Calu3 (cell line): ENCODE measurements at regions of chr17 and their contacts with region 1.

Region 1: GRCh38 chr17:39872751-39873150 is 4.7 kb downstream of the ZPBP2 start:
- DNase-seq: peak; percentile 78
- H3K4me3 Mint-ChIP-seq: no peak overlapping the region
- H3K27ac Mint-ChIP-seq: no peak overlapping the region
- H3K4me1 Mint-ChIP-seq: no peaks in the 10 kb centered on the region
- H3K27me3 Mint-ChIP-seq: peaks cover 11% of the 10 kb centered on the region
- CTCF ChIP-seq: no peak

Region 2: GRCh38 chr17:39668199-39668966 is 204.4 kb before region 1 on chr17 and contains the start of gene PNMT:
- CTCF ChIA-PET with region 1: interaction called, 25 read pairs
- intact Hi-C with region 1: no loop called
- DNase-seq: peak; percentile 100
- H3K4me3 Mint-ChIP-seq: peak within 1 kb of the TSS; percentile 24
- H3K27ac Mint-ChIP-seq: peak within 1 kb of the TSS; percentile 0
- H3K4me1 Mint-ChIP-seq: peaks cover 65% of the 10 kb centered on the region
- H3K27me3 Mint-ChIP-seq: peaks cover 69% of the 10 kb centered on the region
- CTCF ChIP-seq: no peak
- total RNA-seq, gene PNMT: 1.3 and 3.2 TPM in 2 replicates

Region 3: DNA sequence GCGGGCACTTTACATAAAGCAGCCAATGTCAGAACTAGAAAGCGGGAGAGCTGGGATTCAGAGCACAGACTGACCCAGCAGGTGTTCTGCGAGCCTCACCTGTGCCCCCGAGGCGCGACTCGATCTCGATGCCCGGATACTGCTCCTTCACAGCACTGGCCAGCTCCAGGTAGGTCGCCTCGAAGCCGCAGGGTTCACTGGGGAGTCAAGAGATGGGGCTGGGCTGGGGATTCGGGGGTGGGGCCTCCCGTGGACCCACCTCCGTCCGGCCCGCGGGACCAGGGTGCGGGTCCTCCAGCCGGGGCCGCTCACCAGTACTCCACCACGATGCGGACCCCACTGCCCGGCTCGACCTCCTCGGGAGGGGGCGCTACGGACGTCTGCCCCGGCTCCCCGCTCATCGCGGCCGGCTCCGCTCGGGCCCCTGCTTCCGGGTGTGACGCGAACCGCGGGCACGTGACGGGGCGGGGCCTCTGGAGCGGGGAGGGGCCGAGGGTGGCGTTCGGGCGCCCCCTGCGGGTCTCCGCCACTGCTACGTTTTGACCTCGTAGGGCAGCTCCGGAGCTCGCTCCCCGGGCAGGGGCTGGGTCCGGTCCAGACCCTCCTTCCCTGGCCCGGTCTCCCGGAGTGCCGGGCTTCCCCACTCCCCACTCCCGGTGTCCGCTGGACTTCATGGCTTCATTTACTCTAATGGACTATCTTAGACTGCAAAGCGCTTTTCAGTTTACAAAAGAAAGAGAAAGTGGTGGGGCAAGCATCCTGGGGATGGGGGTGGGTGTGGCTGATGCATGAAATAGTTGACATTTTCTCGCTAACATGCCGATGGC is 142.4 kb before region 1 on chr17 and contains the start of gene MIEN1:
- CTCF ChIA-PET with region 1: interaction called, 73 read pairs
- intact Hi-C with region 1: no loop called
- DNase-seq: no peak
- H3K4me3 Mint-ChIP-seq: peak within 1 kb of the TSS; percentile 79
- H3K27ac Mint-ChIP-seq: peak within 1 kb of the TSS; percentile 90
- H3K4me1 Mint-ChIP-seq: peaks cover 34% of the 10 kb centered on the region
- H3K27me3 Mint-ChIP-seq: no peaks in the 10 kb centered on the region
- CTCF ChIP-seq: no peak
- total RNA-seq, gene MIEN1: 2,121 and 2,217 TPM in 2 replicates

Region 4: GRCh38 chr17:39777534-39778365 is 95.0 kb before region 1 on chr17:
- CTCF ChIA-PET with region 1: interaction called, 230 read pairs
- intact Hi-C with region 1: no loop called
- DNase-seq: no peak
- H3K4me3 Mint-ChIP-seq: no peak overlapping the region
- H3K27ac Mint-ChIP-seq: no peak overlapping the region
- H3K4me1 Mint-ChIP-seq: peaks cover 48% of the 10 kb centered on the region
- H3K27me3 Mint-ChIP-seq: no peaks in the 10 kb centered on the region
- CTCF ChIP-seq: no peak

Region 5: GRCh38 chr17:39828443-39828842 is 44.3 kb before region 1 on chr17:
- CTCF ChIA-PET with region 1: interaction called, 182 read pairs
- intact Hi-C with region 1: loop called (anchors 1 kb)
- DNase-seq: peak; percentile 100
- H3K4me3 Mint-ChIP-seq: peak overlapping the region; percentile 36
- H3K27ac Mint-ChIP-seq: peak overlapping the region; percentile 48
- H3K4me1 Mint-ChIP-seq: peaks cover 17% of the 10 kb centered on the region
- H3K27me3 Mint-ChIP-seq: no peaks in the 10 kb centered on the region
- CTCF ChIP-seq: no peak

Region 6: DNA sequence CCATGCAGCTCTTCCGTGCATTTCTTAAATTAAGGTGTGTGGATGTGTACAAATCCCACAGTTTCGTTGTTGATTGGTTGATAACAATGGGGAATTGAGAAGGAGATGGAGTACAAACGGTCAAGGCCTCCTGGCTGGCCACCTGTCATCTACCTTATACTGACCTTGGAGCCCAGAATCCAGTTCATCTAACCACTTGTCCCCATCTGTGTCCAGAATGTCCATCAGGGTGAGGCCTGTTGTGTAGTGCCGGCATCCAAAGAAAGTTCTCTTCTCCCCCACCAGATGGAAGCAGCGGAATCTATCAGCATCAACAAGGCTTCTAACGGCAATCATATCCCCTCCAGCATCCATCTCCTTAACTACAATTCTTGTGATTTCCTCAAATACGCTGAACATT is 44.2 kb after region 1 on chr17:
- CTCF ChIA-PET with region 1: interaction called, 1,000 read pairs
- intact Hi-C with region 1: no loop called
- DNase-seq: peak; percentile 94
- H3K4me3 Mint-ChIP-seq: no peak overlapping the region
- H3K27ac Mint-ChIP-seq: no peak overlapping the region
- H3K4me1 Mint-ChIP-seq: peaks cover 24% of the 10 kb centered on the region
- H3K27me3 Mint-ChIP-seq: no peaks in the 10 kb centered on the region
- CTCF ChIP-seq: no peak

Region 7: DNA sequence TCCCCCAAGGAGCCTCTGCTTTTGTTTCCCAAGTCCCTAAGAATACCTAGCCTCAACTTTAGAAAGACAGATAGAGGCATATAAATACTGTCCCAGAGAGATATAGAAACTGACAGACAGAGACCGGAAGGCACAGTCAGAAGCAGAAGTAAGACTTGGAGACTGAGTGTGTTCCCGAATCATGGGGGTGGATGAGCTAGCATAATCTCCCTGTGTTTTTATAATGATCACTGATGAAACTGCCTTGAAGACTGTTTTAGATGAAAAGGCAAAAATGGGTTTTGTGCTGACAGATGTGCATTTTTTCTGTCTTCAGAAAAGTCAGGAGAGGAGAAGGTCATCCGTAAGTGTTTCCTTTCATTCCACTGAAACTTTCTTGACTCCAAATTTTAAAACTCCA is 99.5 kb after region 1 on chr17:
- CTCF ChIA-PET with region 1: interaction called, 68 read pairs
- intact Hi-C with region 1: no loop called
- DNase-seq: no peak
- H3K4me3 Mint-ChIP-seq: no peak overlapping the region
- H3K27ac Mint-ChIP-seq: no peak overlapping the region
- H3K4me1 Mint-ChIP-seq: peaks cover 17% of the 10 kb centered on the region
- H3K27me3 Mint-ChIP-seq: peaks cover 84% of the 10 kb centered on the region
- CTCF ChIP-seq: no peak

Region 8: DNA sequence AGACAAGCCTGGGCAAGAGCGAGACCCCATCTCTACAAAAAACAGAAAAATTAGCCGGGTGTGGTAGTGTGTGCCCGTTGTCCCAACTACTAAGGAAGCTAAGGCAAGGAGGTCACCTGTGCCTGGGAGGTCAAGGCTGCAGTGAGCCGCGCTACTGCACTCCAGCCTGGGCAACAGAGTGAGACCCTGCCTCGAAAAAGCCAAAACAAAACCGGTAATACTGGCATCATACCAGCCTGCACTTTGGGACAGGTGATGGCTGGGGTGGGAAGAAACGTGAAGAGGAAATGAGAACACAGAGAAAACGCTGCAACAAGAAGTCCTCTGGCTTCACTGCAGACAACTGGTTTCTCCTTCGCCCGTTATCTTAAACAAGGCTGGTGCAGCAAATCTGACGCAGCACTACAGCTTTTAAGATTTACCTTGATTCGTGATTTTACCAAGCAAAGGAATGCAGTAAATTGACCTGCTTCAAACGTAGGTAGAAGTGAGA is 266.9 kb after region 1 on chr17:
- CTCF ChIA-PET with region 1: no interaction called
- intact Hi-C with region 1: no loop called
- DNase-seq: peak; percentile 72
- H3K4me3 Mint-ChIP-seq: peak overlapping the region; percentile 98
- H3K27ac Mint-ChIP-seq: peak overlapping the region; percentile 98
- H3K4me1 Mint-ChIP-seq: peaks cover 45% of the 10 kb centered on the region
- H3K27me3 Mint-ChIP-seq: no peaks in the 10 kb centered on the region
- CTCF ChIP-seq: no peak